Dendritic cell treated with granulocyte-macrophage colony-stimulating factor and Interleukin-4, amounts not matched to agents 40 ng/mL and 50 ng/mL, for 4 days (primary cell): ENCODE measurements at regions of chr6 and their contacts with region 1.

Region 1: GRCh38 chr6:107917451-107918375 is 40.3 kb downstream of the SEC63 start:
- H3K4me3 Mint-ChIP-seq: no peak overlapping the region
- H3K27ac Mint-ChIP-seq: no peak overlapping the region
- H3K4me1 Mint-ChIP-seq: peaks cover 5% of the 10 kb centered on the region
- H3K27me3 Mint-ChIP-seq: no peaks in the 10 kb centered on the region

Region 2: DNA sequence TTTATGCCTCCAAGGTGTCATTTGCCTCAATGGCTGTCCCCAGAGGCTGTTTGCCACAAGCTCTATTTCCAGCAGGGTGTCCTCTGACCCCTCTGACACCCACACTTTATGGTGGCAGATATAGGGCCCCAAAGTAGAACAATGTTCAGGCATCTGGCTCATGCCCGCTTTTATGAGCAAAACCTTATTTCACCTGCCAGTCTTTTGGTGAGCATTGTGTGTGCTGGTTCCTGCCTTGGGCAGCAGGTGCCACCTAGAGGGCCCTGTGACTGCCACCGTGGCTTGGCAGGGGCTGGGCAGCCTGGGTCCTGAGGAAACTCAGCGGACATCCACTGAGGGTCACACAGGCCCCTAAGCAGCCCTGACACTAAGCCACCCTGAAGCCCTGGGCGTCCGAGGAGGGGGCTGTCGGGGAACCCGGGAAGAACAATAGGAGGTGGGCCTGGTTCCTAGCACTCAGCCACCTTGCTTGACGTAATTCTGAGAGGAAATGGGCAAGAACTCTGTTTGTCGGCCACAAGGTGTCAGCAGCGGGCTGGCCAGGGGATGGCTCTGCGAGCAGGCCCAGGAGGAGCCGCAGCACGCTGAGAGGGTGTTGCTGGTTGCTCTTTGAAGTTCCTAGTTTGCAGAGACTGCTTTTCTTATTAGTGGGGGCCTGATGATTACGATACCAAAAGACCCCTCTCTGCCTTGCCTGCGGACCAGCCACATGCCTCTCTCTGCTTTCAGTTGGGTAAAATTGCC is 242.5 kb before region 1 on chr6:
- intact Hi-C with region 1: no loop called
- H3K4me3 Mint-ChIP-seq: no peak overlapping the region
- H3K27ac Mint-ChIP-seq: no peak overlapping the region
- H3K4me1 Mint-ChIP-seq: peaks cover 50% of the 10 kb centered on the region
- H3K27me3 Mint-ChIP-seq: peaks cover 31% of the 10 kb centered on the region

Region 3: DNA sequence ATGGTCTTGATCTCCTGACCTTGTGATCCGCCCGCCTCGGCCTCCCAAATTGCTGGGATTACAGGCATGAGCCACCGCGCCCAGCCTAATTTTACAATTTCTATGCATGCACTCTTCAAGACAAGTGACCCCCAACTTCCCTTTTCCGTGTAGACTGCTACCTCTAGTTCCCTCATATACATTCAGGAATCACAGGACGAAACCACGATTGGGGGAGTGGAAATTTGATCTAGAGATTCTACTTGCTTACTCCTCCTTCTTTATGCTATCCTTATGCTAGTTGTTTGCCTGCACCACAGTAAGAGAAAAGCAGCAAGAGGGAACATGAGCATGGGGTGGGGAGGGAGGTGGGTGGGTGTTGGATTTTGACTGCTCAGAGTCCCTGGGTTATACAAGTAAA is 122.0 kb after region 1 on chr6:
- intact Hi-C with region 1: loop called (anchors 10 kb)
- H3K4me3 Mint-ChIP-seq: no peak overlapping the region
- H3K27ac Mint-ChIP-seq: no peak overlapping the region
- H3K4me1 Mint-ChIP-seq: no peaks in the 10 kb centered on the region
- H3K27me3 Mint-ChIP-seq: no peaks in the 10 kb centered on the region